ENCODE measurements at regions of chr9 and their contacts with region 1.

Region 1: GRCh38 chr9:87479801-87480201 is 17.9 kb upstream of the DAPK1 start:
- DNase-seq: peak; percentile 86
- ATAC-seq: peak; percentile 98
- H3K4me3 ChIP-seq: no peak overlapping the region; the same call in 1 of the 2 replicates
- H3K27ac ChIP-seq: peak overlapping the region; percentile 57
- H3K4me1 ChIP-seq: peaks cover 10% of the 10 kb centered on the region
- H3K27me3 ChIP-seq: no peaks in the 10 kb centered on the region
- CTCF ChIP-seq: no peak
- EP300 ChIP-seq: peak; percentile 61 to 88; a peak in 3 of 4 replicates
- POLR2A ChIP-seq: no peak
- RAD21 ChIP-seq: no peak

Region 2: GRCh38 chr9:87422999-87423398 is 56.8 kb before region 1 on chr9:
- CTCF ChIA-PET with region 1: no interaction called
- POLR2A ChIA-PET with region 1: no interaction called
- RAD21 ChIA-PET with region 1: no interaction called
- SMC1A ChIA-PET with region 1: no interaction called
- in situ Hi-C with region 1: no loop called
- intact Hi-C with region 1: no loop called
- DNase-seq: no peak
- ATAC-seq: no peak; the same call in 2 of the 3 replicates
- H3K4me3 ChIP-seq: no peak overlapping the region
- H3K27ac ChIP-seq: no peak overlapping the region
- H3K4me1 ChIP-seq: no peaks in the 10 kb centered on the region
- H3K27me3 ChIP-seq: no peaks in the 10 kb centered on the region
- CTCF ChIP-seq: 0 out of 6 replicates have a peak, but pooled peaks of 1 of the 3 experiments have one; percentile 2
- EP300 ChIP-seq: no peak
- POLR2A ChIP-seq: no peak
- RAD21 ChIP-seq: no peak

Region 3: GRCh38 chr9:87464110-87464965 is 15.5 kb before region 1 on chr9:
- CTCF ChIA-PET with region 1: interaction called, 8 read pairs
- POLR2A ChIA-PET with region 1: interaction called, 21 read pairs
- RAD21 ChIA-PET with region 1: interaction called, 43 read pairs
- SMC1A ChIA-PET with region 1: interaction called, 54 read pairs
- in situ Hi-C with region 1: no loop called
- intact Hi-C with region 1: no loop called
- DNase-seq: peak; percentile 82
- ATAC-seq: peak; percentile 86
- H3K4me3 ChIP-seq: peak overlapping the region; percentile 12; the same call in 1 of the 2 replicates
- H3K27ac ChIP-seq: peak overlapping the region; percentile 90
- H3K4me1 ChIP-seq: peaks cover 14% of the 10 kb centered on the region
- H3K27me3 ChIP-seq: no peaks in the 10 kb centered on the region
- CTCF ChIP-seq: no peak
- EP300 ChIP-seq: peak; percentile 77 to 84; a peak in 3 of 4 replicates
- POLR2A ChIP-seq: no peak
- RAD21 ChIP-seq: peak; percentile 6; the same call in 1 of the 2 replicates

Region 4: DNA sequence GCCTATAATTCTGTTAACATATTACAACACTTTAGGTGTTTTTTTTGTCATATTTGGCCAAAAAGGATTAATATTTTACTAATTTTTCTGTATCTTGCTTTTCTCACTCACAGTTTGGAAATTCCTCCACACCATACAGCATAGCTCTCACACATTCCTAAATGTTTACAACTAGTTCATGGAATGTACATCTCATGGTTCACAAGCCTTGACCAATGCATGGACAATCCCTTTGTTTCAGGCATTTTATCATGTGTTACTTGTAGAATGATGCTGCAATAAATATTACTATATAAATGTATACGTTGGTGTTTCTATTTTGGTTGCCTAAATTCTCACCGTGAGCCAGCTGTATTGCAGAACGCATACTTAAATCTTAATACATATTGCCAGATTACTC is 738.9 kb after region 1 on chr9:
- CTCF ChIA-PET with region 1: no interaction called
- POLR2A ChIA-PET with region 1: no interaction called
- RAD21 ChIA-PET with region 1: no interaction called
- SMC1A ChIA-PET with region 1: no interaction called
- in situ Hi-C with region 1: no loop called
- intact Hi-C with region 1: no loop called
- DNase-seq: no peak
- ATAC-seq: no peak
- H3K4me3 ChIP-seq: no peak overlapping the region
- H3K27ac ChIP-seq: no peak overlapping the region
- H3K4me1 ChIP-seq: no peaks in the 10 kb centered on the region
- H3K27me3 ChIP-seq: no peaks in the 10 kb centered on the region
- CTCF ChIP-seq: no peak
- EP300 ChIP-seq: no peak
- POLR2A ChIP-seq: no peak
- RAD21 ChIP-seq: no peak

Measured in GM12878 (cell line).